A549 (cell line): ENCODE measurements at regions of chr14 and their contacts with region 1.

Region 1: DNA sequence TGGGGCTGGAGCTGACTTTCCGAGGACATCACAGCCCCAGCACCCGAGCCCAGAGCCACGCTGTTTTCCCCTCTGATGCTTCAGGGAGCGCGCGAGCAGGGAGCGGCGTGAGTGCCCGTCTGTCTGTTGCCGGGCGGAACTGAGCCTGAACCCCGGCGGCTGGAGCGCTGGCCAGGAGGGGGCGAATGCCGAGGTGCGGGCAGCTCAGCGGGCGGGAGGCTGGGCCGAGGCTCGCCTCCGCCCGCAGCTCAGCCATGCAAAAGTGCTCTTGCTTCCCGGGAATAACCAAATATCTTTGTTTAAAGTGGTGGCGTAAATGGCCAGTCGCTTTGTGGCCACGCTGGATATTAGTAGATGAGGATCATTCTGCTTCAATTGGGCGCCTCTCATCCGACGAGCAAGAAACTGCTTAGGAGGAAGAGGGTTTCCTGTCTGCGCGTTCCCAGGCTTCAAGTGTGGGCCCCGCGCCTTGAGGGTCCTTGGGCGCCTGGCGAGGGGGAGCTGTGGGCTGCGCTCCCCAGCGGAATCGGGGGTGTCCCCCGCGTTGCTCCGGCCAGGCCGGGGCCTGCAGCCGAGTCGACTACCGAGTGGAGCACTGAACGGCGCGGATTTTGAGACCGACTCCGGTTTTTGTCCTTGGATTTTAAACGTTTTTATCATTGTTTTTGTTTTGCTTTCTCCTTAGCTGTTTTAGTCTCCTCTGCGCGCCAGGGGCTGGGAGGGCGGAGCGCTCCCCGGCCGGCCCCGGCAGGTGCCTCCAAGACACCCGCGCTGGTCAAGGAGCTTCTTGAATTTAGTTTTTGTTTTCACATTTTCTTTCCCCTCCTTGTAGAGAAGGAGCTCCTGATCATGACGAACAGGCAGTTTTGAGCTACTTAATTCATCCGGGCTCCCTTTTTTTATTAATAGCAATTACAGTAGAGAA is 831 bp upstream of the NKX2-1 start:
- DNase-seq: peak; percentile 57 to 64
- ATAC-seq: peak; percentile 73 to 83
- H3K4me3 ChIP-seq: peak overlapping the region; percentile 54
- H3K27ac ChIP-seq: no peak overlapping the region
- H3K4me1 ChIP-seq: peaks cover 9% of the 10 kb centered on the region; the same call in 2 of the 3 replicates
- CTCF ChIP-seq: peak; percentile 29
- EP300 ChIP-seq: no peak
- POLR2A ChIP-seq: no peak
- RAD21 ChIP-seq: no peak

Region 2: GRCh38 chr14:36505181-36505815 is 15.6 kb before region 1 on chr14:
- CTCF ChIA-PET with region 1: interaction called, 22 read pairs
- POLR2A ChIA-PET with region 1: no interaction called
- DNase-seq: no peak
- ATAC-seq: peak in 1 of 2 experiments; percentile 46; a peak in 3 of 6 replicates
- H3K4me3 ChIP-seq: 0 out of 3 replicates have a peak overlapping the region, but pooled peaks have one; percentile 14
- H3K27ac ChIP-seq: no peak overlapping the region
- H3K4me1 ChIP-seq: no peaks in the 10 kb centered on the region
- CTCF ChIP-seq: no peak
- EP300 ChIP-seq: no peak
- POLR2A ChIP-seq: no peak
- RAD21 ChIP-seq: no peak

Region 3: DNA sequence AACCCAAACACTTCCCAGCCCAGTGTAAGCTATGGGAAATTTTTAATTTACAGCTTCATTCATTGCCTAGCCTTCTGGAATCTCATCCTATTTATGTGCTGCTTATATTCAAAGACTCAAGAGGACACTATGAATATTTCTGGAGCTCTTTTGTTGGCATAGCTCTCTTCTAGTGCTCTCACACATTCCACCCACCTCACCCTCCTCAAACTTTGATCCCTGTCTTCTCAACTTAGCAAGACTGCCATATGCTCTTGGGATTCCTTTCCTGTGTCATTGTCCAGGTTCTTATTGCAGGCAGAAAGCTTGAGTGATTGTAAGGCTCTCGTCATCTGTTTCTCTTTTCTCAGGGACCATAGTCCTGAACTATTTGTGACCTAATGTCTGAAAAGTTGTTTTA is 17.2 kb after region 1 on chr14:
- CTCF ChIA-PET with region 1: interaction called, 61 read pairs
- POLR2A ChIA-PET with region 1: no interaction called
- DNase-seq: no peak
- ATAC-seq: no peak
- H3K4me3 ChIP-seq: no peak overlapping the region
- H3K27ac ChIP-seq: no peak overlapping the region
- H3K4me1 ChIP-seq: no peaks in the 10 kb centered on the region
- CTCF ChIP-seq: no peak
- EP300 ChIP-seq: no peak
- POLR2A ChIP-seq: no peak
- RAD21 ChIP-seq: no peak

Region 4: GRCh38 chr14:36604757-36605505 is 84.1 kb after region 1 on chr14:
- CTCF ChIA-PET with region 1: interaction called, 12 read pairs
- POLR2A ChIA-PET with region 1: no interaction called
- DNase-seq: peak; percentile 71 to 80
- ATAC-seq: peak; percentile 80 to 91
- H3K4me3 ChIP-seq: no peak overlapping the region
- H3K27ac ChIP-seq: no peak overlapping the region
- H3K4me1 ChIP-seq: 0 out of 3 replicates have a peak, but pooled peaks cover 3% of the 10 kb centered on the region
- CTCF ChIP-seq: peak; percentile 82
- EP300 ChIP-seq: no peak
- POLR2A ChIP-seq: no peak
- RAD21 ChIP-seq: peak; percentile 83 to 85

Region 5: DNA sequence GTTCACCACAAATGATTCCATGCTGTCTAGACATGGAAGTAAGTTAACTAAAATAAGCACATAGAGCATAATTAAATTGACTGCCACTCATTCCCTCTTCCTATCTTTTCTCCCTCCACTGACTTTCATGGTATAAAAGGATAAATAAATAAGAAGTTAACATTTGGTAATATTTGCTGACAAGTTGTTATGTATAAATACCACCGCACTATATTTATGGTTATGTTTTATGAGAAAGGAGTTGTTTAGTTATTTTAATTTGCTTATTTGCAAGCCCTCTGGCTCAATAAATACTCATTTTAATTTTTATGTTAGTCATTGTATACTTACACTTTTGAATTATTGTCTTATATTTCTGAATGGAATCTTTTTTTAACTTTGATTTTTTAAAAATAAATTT is 790.4 kb after region 1 on chr14:
- CTCF ChIA-PET with region 1: no interaction called
- POLR2A ChIA-PET with region 1: no interaction called
- DNase-seq: no peak
- ATAC-seq: no peak
- H3K4me3 ChIP-seq: no peak overlapping the region
- H3K27ac ChIP-seq: no peak overlapping the region
- H3K4me1 ChIP-seq: no peaks in the 10 kb centered on the region
- CTCF ChIP-seq: no peak
- EP300 ChIP-seq: no peak
- POLR2A ChIP-seq: no peak
- RAD21 ChIP-seq: no peak